Ascending aorta (tissue), 2 donors: ENCODE measurements at regions of chr14 and their contacts with region 1.

Region 1: GRCh38 chr14:64704143-64704742 is at the start of gene PLEKHG3:
- DNase-seq: peak in 1 of 2 donors; percentile 87
- H3K4me3 ChIP-seq: peak within 1 kb of the TSS; percentile 74 to 90
- H3K27ac ChIP-seq: peak within 1 kb of the TSS; percentile 88 to 95
- H3K4me1 ChIP-seq: peaks cover 7 to 35% of the 10 kb centered on the region in 2 donors
- H3K27me3 ChIP-seq: no peaks in the 10 kb centered on the region
- CTCF ChIP-seq: no peak
- total RNA-seq, gene PLEKHG3: 134 TPM

Region 2: GRCh38 chr14:64671591-64671990 is 32.7 kb before region 1 on chr14:
- intact Hi-C with region 1: loop called (anchors 5 kb)
- DNase-seq: no peak
- H3K4me3 ChIP-seq: no peak overlapping the region
- H3K27ac ChIP-seq: no peak overlapping the region
- H3K4me1 ChIP-seq: peaks cover 0 to 5% of the 10 kb centered on the region in 2 donors
- H3K27me3 ChIP-seq: no peaks in the 10 kb centered on the region
- CTCF ChIP-seq: peak; percentile 70 to 80 (median 78)

Region 3: DNA sequence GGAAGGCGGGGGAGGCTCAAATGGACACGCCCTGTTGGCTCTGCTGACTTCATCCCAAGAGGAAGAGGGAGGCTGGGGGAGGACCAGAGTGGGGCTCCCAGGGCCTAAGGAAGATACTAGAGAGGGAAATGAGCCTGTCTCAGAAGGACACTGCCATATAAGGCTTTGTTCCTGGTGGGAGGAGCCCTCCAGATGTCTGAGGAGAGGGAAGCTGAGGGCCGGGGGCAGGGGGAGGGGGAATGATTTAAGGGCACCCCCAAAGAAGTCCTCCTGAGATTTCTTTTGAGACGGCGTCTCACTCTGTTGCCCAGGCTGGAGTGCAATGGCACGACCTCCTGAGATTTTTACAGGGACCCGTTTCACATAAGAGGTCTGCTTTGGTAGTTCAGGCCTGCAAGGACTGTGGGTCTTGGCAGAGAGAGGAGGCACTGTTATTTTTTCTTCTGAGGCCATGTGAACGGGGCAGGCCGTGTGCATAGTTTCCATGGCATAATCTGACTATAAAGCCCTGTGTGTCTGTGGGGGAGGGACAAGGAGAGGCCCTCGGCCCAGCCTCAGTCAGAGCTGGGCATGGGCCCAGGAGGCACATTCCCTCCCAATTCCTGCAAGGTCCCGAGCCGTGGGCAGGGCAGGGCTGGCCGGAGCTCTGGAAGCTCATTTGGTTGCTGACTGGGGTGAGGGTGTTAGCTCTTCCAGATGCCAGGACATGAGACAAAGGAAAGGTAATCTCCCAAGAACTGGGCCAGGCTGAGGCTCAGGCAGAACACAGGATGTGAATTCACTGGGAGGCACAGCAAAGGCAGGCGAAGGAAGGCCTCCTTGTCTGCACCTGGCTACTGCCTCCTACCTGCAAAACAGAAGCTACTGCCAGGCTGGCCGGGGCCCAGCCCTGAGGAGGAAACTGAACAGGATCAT is 22.2 kb before region 1 on chr14:
- intact Hi-C with region 1: loop called (anchors 1 kb)
- DNase-seq: peak; percentile 67 to 94
- H3K4me3 ChIP-seq: peak overlapping the region in 1 of 2 donors; percentile 21
- H3K27ac ChIP-seq: peak overlapping the region; percentile 93 to 94
- H3K4me1 ChIP-seq: peaks cover 7 to 28% of the 10 kb centered on the region in 2 donors
- H3K27me3 ChIP-seq: no peaks in the 10 kb centered on the region
- CTCF ChIP-seq: no peak

Region 4: GRCh38 chr14:64720131-64720576 is 15.9 kb after region 1 on chr14:
- intact Hi-C with region 1: loop called (anchors 1 kb)
- DNase-seq: peak; percentile 10 to 68
- H3K4me3 ChIP-seq: no peak overlapping the region
- H3K27ac ChIP-seq: peak overlapping the region; percentile 89 to 96
- H3K4me1 ChIP-seq: peaks cover 29 to 93% of the 10 kb centered on the region in 2 donors
- H3K27me3 ChIP-seq: no peaks in the 10 kb centered on the region
- CTCF ChIP-seq: no peak

Region 5: DNA sequence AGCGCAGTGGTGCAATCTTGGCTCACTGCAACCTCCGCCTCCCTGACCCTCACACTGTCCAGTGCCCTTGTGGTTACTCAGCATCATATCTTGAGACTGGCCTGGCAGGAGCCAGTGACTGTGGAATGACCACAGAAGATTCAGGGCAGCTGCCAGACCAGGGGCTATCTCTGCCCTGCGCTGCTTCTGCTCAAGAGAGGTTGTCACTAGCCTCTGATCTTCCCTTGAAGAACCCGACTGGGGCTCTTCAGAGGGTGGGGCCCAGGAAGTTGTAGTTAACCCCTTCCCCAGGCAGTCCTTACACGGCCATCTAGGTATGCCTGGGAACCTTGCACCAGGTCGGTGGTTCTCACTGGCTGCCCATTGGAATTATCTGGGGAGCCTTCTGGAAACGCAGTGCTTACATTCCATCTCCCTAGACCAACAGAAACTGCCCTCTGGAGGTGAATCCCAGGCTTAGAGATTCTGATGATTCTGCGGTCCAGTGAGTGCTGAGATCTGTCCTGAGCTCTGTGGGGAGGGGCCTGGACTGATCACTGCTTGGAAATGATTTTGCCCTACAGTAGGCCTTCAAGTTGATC is 41.4 kb after region 1 on chr14:
- intact Hi-C with region 1: loop called (anchors 5 kb)
- DNase-seq: no peak
- H3K4me3 ChIP-seq: no peak overlapping the region
- H3K27ac ChIP-seq: peak overlapping the region; percentile 78 to 84
- H3K4me1 ChIP-seq: peaks cover 6 to 25% of the 10 kb centered on the region in 2 donors
- H3K27me3 ChIP-seq: no peaks in the 10 kb centered on the region
- CTCF ChIP-seq: peak in 1 of 3 experiments; percentile 26